Aorta (tissue), 5 donors: ENCODE measurements at regions of chr4 and their contacts with region 1.

Region 1: GRCh38 chr4:155371432-155372043 is 5.2 kb downstream of the MAP9 start:
- DNase-seq: no peak
- ATAC-seq: no peak
- H3K4me3 ChIP-seq: no peak overlapping the region
- H3K27ac ChIP-seq: no peak overlapping the region
- H3K4me1 ChIP-seq: no peaks in the 10 kb centered on the region
- H3K27me3 ChIP-seq: no peaks in the 10 kb centered on the region

Region 2: DNA sequence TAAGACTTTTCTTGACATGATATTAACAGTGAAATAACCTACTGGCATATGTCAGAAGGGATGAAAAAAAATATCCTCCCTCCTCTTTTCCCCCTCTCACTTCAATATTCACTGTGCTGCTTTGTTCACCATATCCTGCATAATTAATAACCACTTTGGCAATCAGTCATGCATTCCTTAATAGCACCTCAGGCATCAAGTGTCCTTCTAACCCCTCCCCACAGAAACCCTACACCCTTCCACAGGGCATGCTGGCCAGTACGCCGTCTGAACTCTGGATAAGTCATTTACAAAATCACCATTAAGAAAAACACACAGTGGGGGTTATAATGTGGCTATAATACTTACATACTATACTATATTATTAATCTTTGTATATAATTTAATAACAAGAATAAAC is 1434.2 kb after region 1 on chr4:
- intact Hi-C with region 1: loop called in 1 of 2 experiments (anchors 5 kb)
- DNase-seq: no peak
- ATAC-seq: no peak
- H3K4me3 ChIP-seq: no peak overlapping the region
- H3K27ac ChIP-seq: no peak overlapping the region
- H3K4me1 ChIP-seq: no peaks in the 10 kb centered on the region
- H3K27me3 ChIP-seq: no peaks in the 10 kb centered on the region